Naive thymus-derived CD4-positive, alpha-beta T cell (primary cell): ENCODE measurements at regions of chr22 and their contacts with region 1.

Region 1: GRCh38 chr22:49970528-49971231 is 10.1 kb downstream of the PIM3 start:
- DNase-seq: peak; percentile 73 to 96 (median 81)
- ATAC-seq: peak; percentile 87
- H3K4me3 ChIP-seq: peak overlapping the region; percentile 53
- H3K4me3 Mint-ChIP-seq: peak overlapping the region; percentile 81 to 90 (median 84)
- H3K27ac ChIP-seq: peak overlapping the region; percentile 30
- H3K27ac Mint-ChIP-seq: peak overlapping the region; percentile 83 to 96 (median 92)
- H3K4me1 ChIP-seq: peaks cover 15 to 24% of the 10 kb centered on the region in 2 donors
- H3K4me1 Mint-ChIP-seq: peaks cover 12 to 38% (median 21%) of the 10 kb centered on the region in 7 donors
- H3K27me3 ChIP-seq: no peaks in the 10 kb centered on the region
- H3K27me3 Mint-ChIP-seq: no peaks in the 10 kb centered on the region

Region 2: DNA sequence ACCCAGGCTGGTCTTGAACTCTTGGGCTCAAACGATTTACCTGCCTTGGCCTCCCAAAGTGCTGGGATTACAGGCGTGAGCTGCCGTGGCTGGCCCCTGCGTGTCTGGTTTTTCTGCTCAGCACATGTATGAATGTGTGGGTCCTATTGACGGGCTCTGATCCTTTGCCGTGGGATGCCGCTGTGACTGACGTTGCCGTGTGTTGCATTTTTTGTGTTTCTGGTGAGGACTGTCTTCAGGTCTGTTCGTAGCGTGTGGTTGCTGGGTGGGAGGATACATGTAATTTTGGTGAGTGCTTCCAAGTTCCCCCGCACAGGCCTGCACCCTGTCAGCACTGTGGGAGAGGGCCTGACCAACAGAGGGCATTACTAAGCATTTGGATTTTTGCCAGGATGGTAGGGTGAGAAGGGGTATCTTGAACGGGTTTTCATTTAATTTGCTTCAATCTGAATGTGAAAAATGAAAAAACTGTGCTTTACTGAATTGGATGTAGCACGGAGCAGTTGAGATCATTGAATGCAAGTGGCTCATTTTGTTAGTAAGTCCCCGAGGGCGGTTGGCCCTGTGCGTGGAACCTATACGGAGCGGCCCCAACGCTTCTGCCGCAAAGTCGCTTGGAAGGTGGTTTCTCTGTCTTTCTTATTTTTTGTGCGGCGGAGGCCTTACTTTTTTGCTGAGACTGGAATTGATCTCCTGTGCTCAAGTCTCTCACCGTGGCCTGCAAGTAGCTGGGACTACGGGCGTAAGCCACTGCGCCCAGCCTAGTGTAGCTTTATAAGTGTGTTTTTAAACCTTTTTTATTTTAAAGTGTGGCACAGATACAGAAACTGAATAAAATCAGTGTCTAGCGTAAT is 108.8 kb before region 1 on chr22:
- CTCF ChIA-PET with region 1: no interaction called
- POLR2A ChIA-PET with region 1: no interaction called
- intact Hi-C with region 1: loop called in 1 of 2 experiments (anchors 10 kb)
- DNase-seq: no peak
- ATAC-seq: no peak
- H3K4me3 ChIP-seq: no peak overlapping the region
- H3K4me3 Mint-ChIP-seq: peak overlapping the region in 4 of 10 donors; percentile 12 to 23 (median 16)
- H3K27ac ChIP-seq: no peak overlapping the region
- H3K27ac Mint-ChIP-seq: peak overlapping the region in 8 of 9 donors; percentile 23 to 75 (median 58)
- H3K4me1 ChIP-seq: peaks cover 4 to 6% of the 10 kb centered on the region in 2 donors
- H3K4me1 Mint-ChIP-seq: peaks cover 25 to 72% (median 45%) of the 10 kb centered on the region in 7 donors
- H3K27me3 ChIP-seq: no peaks in the 10 kb centered on the region
- H3K27me3 Mint-ChIP-seq: no peaks in the 10 kb centered on the region

Region 3: GRCh38 chr22:49936018-49936952 is 34.4 kb before region 1 on chr22:
- CTCF ChIA-PET with region 1: interaction called, 4 read pairs
- POLR2A ChIA-PET with region 1: interaction called, 11 read pairs
- intact Hi-C with region 1: loop called (anchors 2 kb)
- DNase-seq: peak; percentile 85 to 98 (median 91)
- ATAC-seq: peak; percentile 84
- H3K4me3 ChIP-seq: peak overlapping the region; percentile 41
- H3K4me3 Mint-ChIP-seq: peak overlapping the region; percentile 56 to 76 (median 73)
- H3K27ac ChIP-seq: peak overlapping the region; percentile 99
- H3K27ac Mint-ChIP-seq: peak overlapping the region; percentile 78 to 94 (median 91)
- H3K4me1 ChIP-seq: peaks cover 12 to 18% of the 10 kb centered on the region in 2 donors
- H3K4me1 Mint-ChIP-seq: peaks cover 6 to 31% (median 23%) of the 10 kb centered on the region in 7 donors
- H3K27me3 ChIP-seq: no peaks in the 10 kb centered on the region
- H3K27me3 Mint-ChIP-seq: no peaks in the 10 kb centered on the region

Region 4: DNA sequence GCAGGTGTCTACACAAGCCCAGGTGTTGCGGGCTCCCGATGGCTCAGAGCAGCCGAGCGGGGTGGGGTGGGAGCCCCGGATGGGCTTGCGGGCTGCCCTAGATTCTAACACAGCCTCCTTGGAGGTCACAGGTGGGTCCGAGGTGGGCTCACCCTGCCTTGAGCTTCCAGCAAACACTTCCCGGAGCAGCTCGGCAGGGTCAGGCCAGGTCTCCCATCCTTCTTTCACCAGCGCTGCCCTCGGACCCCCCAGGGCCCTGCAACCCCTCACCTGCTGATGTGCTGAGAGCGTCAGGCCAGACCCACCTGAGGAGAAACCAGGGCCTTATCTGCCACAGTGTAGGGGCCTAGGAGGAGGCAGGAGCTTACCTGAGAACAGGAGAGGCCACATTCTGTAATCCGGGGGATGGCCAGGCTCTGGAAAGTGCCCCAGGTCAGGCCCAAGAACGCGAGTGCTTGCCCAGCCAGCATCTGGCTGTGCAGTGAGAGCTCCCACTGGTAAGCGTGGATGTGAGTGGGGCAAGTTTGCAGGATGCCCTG is 41.6 kb after region 1 on chr22:
- CTCF ChIA-PET with region 1: no interaction called
- POLR2A ChIA-PET with region 1: no interaction called
- intact Hi-C with region 1: no loop called
- DNase-seq: peak in 1 of 9 donors; percentile 20
- ATAC-seq: no peak
- H3K4me3 ChIP-seq: no peak overlapping the region
- H3K4me3 Mint-ChIP-seq: peak overlapping the region in 5 of 10 donors; percentile 26 to 75 (median 64)
- H3K27ac ChIP-seq: no peak overlapping the region
- H3K27ac Mint-ChIP-seq: no peak overlapping the region
- H3K4me1 ChIP-seq: peaks cover 16% of the 10 kb centered on the region in 2 donors
- H3K4me1 Mint-ChIP-seq: peaks cover 0 to 11% (median 8%) of the 10 kb centered on the region in 7 donors
- H3K27me3 ChIP-seq: no peaks in the 10 kb centered on the region
- H3K27me3 Mint-ChIP-seq: peaks cover 0 to 23% (median 9%) of the 10 kb centered on the region in 5 donors

Region 5: GRCh38 chr22:50030297-50031188 is 59.9 kb after region 1 on chr22:
- CTCF ChIA-PET with region 1: interaction called, 3 read pairs
- POLR2A ChIA-PET with region 1: no interaction called
- intact Hi-C with region 1: loop called in 1 of 2 experiments (anchors 10 kb)
- DNase-seq: peak; percentile 65 to 84 (median 80)
- ATAC-seq: peak; percentile 95
- H3K4me3 ChIP-seq: no peak overlapping the region
- H3K4me3 Mint-ChIP-seq: peak overlapping the region in 1 of 10 donors; percentile 34
- H3K27ac ChIP-seq: no peak overlapping the region
- H3K27ac Mint-ChIP-seq: no peak overlapping the region
- H3K4me1 ChIP-seq: peaks cover 2 to 9% of the 10 kb centered on the region in 2 donors
- H3K4me1 Mint-ChIP-seq: peaks cover 0 to 12% (median 5%) of the 10 kb centered on the region in 7 donors
- H3K27me3 ChIP-seq: no peaks in the 10 kb centered on the region
- H3K27me3 Mint-ChIP-seq: peaks cover 0 to 27% (median 6%) of the 10 kb centered on the region in 5 donors

Region 6: GRCh38 chr22:50184004-50184543 is 213.4 kb after region 1 on chr22:
- CTCF ChIA-PET with region 1: no interaction called
- POLR2A ChIA-PET with region 1: no interaction called
- intact Hi-C with region 1: no loop called
- DNase-seq: no peak
- ATAC-seq: no peak
- H3K4me3 ChIP-seq: no peak overlapping the region
- H3K4me3 Mint-ChIP-seq: peak overlapping the region in 9 of 10 donors; percentile 54 to 79 (median 73)
- H3K27ac ChIP-seq: no peak overlapping the region
- H3K27ac Mint-ChIP-seq: peak overlapping the region in 2 of 9 donors; percentile 38 to 75
- H3K4me1 ChIP-seq: peaks cover 19 to 20% of the 10 kb centered on the region in 2 donors
- H3K4me1 Mint-ChIP-seq: peaks cover 0 to 31% (median 18%) of the 10 kb centered on the region in 7 donors
- H3K27me3 ChIP-seq: no peaks in the 10 kb centered on the region
- H3K27me3 Mint-ChIP-seq: peaks cover 0 to 6% (median 5%) of the 10 kb centered on the region in 5 donors